ENCODE measurements at regions of chr17 and their contacts with region 1.

Region 1: DNA sequence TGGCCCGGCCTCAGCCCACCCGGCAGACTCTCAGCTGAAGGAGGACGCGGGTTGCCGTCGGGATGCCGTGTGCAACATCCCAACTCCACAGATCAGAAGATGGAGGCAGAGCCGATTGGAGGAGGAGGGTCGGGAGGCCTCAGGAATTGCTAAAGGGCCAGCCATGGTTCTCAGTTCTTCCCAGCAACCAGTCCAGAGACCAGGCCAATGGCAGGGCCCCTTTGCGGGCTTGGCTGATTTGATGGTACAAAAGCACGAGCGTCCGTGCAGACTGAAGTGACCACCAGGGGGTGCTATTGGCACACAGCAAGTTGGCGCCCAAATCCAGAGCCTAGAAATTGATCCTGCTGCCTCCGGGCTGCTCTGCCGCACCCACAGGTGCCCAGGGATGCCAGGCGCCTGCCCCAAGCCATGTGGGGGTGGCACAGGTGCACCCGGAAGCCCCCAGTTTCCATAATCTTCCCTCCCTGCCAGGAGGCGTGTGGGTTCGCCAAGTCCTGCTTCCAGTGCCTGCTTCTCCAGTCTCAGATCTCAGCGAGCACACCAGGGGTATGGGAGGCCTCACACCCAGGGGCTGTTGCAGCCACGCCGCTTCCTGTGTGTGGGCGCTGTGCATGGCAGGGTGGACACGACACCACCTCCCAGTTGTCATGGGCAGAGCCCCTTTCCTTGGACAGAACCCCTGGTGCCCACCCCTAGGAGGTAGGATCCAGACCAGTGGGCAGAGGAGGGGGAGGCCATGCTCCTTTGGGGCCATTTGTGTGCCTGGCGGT is 7.1 kb upstream of the TEX19 start:
- DNase-seq: peak; percentile 92
- ATAC-seq: peak; percentile 92
- H3K4me3 Mint-ChIP-seq: no peak overlapping the region
- H3K27ac Mint-ChIP-seq: no peak overlapping the region
- H3K4me1 Mint-ChIP-seq: no peaks in the 10 kb centered on the region
- H3K27me3 Mint-ChIP-seq: peaks cover 6% of the 10 kb centered on the region

Region 2: DNA sequence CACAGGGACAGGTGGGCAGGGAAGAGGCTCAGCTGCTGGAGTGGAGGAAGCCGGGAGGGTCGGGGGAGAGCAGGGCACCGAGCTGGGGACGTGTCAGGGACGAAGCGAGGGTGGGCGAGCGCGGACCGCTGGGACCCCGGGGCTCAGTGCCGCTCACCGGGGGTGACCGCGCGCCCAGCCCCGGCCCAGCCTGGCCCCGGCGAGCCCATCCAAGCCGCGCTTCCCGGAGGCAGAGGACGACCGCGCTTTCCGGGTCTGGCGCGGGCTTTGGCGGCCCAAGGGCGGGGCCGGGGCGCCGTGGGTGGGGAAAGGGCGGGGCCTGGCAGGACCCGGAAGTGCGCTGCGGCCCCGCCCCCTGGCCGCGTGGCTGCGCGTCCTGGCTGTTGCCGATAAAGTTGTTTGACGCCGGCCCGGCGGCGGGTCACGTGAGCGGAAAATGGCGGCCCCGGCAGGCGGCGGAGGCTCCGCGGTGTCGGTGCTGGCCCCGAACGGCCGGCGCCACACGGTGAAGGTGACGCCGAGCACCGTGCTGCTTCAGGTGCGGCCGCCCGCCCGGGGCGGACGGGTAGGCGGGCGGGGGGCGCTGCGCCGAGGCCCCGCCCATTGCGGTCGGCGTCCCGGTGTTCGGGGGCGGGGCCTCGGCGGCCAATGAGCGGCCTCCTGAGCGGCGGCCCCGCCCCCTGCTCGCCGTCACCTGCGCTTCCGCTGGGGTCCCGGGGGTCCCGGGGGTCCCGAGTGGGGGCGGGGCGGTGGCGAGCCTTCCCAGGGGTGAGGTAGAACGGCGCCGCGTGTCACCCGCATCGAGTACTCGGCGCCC is 374.5 kb before region 1 on chr17 and contains the start of gene ASPSCR1:
- CTCF ChIA-PET with region 1: no interaction called
- POLR2A ChIA-PET with region 1: no interaction called
- intact Hi-C with region 1: no loop called
- DNase-seq: peak; percentile 95
- ATAC-seq: peak; percentile 83
- H3K4me3 Mint-ChIP-seq: peak within 1 kb of the TSS; percentile 94
- H3K27ac Mint-ChIP-seq: peak within 1 kb of the TSS; percentile 98
- H3K4me1 Mint-ChIP-seq: peaks cover 32% of the 10 kb centered on the region
- H3K27me3 Mint-ChIP-seq: no peaks in the 10 kb centered on the region
- total RNA-seq, gene ASPSCR1: 23.3 to 26.5 TPM

Region 3: DNA sequence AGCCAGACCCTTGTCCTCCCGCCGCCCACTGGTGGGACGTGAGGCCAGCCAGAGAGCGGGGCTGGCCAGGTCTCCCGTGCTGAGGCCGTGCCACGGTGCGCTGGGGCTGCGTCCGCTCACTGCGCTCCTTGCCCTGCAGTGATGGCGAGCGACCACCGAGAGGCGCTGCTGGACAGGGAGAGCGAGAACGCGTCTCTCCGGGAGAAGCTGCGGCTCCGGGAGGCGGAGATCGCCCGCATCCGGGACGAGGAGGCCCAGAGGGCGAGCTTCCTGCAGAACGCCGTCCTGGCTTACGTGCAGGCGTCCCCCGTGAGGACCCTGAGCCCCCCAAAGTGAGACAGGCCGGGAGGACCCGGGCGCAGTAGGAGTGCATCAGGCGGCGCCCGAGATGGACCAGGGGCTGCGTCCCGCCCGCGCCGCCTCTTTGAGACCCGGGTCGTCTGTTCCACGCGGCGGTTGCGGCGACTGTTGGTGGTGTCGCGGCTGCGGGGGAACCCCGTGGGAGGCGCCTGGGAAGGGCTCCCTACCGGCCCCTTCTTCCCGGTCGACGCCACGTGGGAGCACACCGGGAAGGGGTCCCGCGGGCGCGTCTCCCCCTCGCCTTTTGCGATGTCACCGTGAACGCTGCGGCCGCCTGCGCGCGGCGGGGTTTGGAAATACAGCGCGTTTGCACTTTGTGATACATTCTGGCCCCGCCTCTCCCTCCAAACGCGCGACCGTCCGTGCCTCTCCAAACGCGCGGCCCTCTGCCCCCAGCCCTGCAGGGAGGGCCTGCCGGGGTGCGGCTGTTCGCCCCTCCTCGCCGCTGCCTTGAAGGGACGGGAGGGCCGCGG is 321.2 kb before region 1 on chr17:
- CTCF ChIA-PET with region 1: no interaction called
- POLR2A ChIA-PET with region 1: no interaction called
- intact Hi-C with region 1: loop called in 1 of 2 experiments (anchors 1 kb)
- DNase-seq: peak; percentile 92
- ATAC-seq: peak; percentile 79
- H3K4me3 Mint-ChIP-seq: peak overlapping the region; percentile 67
- H3K27ac Mint-ChIP-seq: no peak overlapping the region
- H3K4me1 Mint-ChIP-seq: peaks cover 13% of the 10 kb centered on the region
- H3K27me3 Mint-ChIP-seq: no peaks in the 10 kb centered on the region

Region 4: DNA sequence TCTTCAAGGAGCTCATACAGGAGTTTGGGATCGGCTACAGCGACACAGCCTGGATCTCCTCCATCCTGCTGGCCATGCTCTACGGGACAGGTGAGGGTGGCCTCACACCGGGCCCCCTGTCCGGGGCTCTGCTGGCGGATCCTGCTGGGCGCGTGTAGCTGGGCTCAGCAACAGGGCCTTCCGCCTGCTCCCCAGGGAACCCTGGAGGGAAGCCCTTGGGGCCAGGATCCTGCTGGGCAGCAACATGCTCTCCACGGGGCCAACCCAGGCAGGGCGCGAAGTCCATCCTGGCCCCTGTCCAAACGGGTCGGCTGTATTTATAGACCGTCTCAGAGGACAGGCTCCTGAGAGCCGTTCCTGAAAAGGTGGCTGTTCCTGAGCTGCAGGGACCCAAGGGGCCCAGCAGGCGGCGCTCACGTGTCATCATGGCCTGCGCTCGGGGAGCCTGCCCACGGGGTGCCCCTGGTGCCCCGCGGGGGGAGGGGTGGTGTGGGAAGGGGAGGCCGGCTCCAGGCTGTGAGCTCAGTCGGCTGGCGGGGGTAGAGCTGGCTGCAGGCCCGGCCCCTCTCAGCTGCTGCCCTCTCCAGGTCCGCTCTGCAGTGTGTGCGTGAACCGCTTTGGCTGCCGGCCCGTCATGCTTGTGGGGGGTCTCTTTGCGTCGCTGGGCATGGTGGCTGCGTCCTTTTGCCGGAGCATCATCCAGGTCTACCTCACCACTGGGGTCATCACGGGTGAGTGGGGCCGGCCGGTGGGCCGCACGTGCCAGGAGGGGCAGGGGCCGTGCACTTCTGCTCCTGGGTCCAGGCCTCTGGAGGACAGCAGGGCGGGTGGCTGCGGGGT is 115.5 kb before region 1 on chr17:
- CTCF ChIA-PET with region 1: interaction called, 5 read pairs
- POLR2A ChIA-PET with region 1: no interaction called
- intact Hi-C with region 1: loop called in 1 of 2 experiments (anchors 2 kb)
- DNase-seq: peak; percentile 85
- ATAC-seq: peak; percentile 25
- H3K4me3 Mint-ChIP-seq: no peak overlapping the region
- H3K27ac Mint-ChIP-seq: no peak overlapping the region
- H3K4me1 Mint-ChIP-seq: peaks cover 46% of the 10 kb centered on the region
- H3K27me3 Mint-ChIP-seq: no peaks in the 10 kb centered on the region

Region 5: GRCh38 chr17:82494236-82495055 is 142.5 kb after region 1 on chr17:
- CTCF ChIA-PET with region 1: no interaction called
- POLR2A ChIA-PET with region 1: no interaction called
- intact Hi-C with region 1: loop called in 1 of 2 experiments (anchors 1 kb)
- DNase-seq: peak; percentile 93
- ATAC-seq: peak; percentile 80
- H3K4me3 Mint-ChIP-seq: peak overlapping the region; percentile 60
- H3K27ac Mint-ChIP-seq: peak overlapping the region; percentile 76
- H3K4me1 Mint-ChIP-seq: peaks cover 14% of the 10 kb centered on the region
- H3K27me3 Mint-ChIP-seq: no peaks in the 10 kb centered on the region

Region 6: DNA sequence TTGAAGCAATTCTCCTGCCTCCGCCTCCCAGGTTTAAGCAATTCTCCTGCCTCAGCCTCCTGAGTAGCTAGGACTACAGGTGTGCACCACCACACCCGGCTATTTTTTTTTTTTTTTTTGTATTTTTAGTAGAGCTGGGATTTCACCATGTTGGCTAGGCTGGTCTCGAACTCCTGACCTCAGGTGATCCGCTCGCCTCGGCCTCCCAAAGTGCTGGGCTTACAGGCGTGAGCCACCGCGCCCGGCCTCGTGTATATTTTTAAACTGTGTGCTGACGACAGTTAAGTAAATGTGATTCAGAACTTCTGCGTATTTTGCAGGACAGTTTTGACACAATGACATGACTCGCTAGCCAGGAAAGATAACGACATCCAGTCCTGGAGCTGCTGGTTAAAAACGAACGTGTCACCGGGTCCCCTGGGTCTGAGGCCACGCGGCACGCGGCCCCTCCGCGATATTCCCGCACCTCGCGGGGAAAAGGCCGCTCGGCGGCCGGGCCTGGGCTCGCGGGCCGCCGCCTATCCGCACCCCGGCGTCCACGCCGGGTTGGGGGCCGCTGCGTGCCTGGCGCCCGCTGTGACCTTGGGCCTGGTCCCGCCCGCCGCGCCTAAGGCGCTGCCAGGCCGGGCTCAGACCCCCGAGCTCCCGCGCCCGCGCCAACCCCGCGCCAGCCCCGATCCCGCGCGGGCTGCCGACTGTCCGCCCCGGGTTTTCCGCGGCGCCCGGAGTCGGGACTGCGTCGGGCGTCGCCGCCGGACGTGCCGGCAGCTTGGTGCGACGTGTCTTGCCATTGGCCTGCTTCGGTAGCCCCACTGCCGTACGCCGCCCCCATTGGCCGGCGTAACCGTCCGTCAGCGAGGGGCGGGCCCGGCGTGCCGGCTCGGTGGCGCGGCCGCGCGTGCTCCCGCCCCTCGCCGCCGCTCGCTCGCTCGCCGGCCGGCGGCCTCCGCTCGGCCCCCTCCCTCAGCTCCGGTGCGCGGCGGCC is 167.2 kb after region 1 on chr17 and contains the start of gene FOXK2:
- CTCF ChIA-PET with region 1: no interaction called
- POLR2A ChIA-PET with region 1: no interaction called
- intact Hi-C with region 1: no loop called
- DNase-seq: peak; percentile 95
- ATAC-seq: peak; percentile 98
- H3K4me3 Mint-ChIP-seq: peak within 1 kb of the TSS; percentile 88
- H3K27ac Mint-ChIP-seq: peak within 1 kb of the TSS; percentile 92
- H3K4me1 Mint-ChIP-seq: peaks cover 24% of the 10 kb centered on the region
- H3K27me3 Mint-ChIP-seq: no peaks in the 10 kb centered on the region
- total RNA-seq, gene FOXK2: 58.1 to 75.4 TPM

Region 7: DNA sequence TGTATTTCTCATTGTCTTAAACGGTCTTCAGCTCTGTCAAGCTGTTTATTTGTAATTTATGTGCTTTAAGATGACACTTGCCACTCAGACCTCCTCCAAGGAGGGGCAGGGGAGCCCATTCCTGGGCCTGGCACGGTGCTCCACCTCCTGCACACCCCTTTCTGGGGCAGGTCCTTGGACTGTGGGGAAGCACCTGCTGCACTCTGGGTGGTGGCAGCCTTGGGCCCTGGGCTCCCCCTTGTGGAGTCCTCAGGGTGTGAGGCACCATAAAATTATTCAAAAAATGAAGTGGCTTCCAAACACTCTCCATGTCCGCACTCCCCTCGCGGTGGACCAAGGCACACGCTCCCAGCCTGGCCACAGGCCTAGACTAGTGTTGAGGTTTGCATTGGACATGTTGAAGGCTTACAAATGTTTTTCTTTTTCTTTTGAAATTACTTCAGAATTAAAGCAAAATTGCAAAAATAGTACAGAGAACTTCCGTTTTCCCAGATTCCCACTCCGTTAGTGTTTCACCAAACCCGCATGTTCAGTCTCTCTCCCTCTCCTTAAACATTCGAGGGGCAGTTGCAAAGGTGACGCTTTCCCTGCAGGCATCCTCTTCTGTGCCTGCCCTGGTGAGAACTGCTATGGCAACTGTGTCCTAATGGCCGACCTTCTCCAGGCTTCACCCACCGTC is 200.0 kb after region 1 on chr17:
- CTCF ChIA-PET with region 1: interaction called, 3 read pairs
- POLR2A ChIA-PET with region 1: no interaction called
- intact Hi-C with region 1: loop called (anchors 1 to 5 kb)
- DNase-seq: peak; percentile 90
- ATAC-seq: peak; percentile 100
- H3K4me3 Mint-ChIP-seq: no peak overlapping the region
- H3K27ac Mint-ChIP-seq: peak overlapping the region; percentile 56
- H3K4me1 Mint-ChIP-seq: peaks cover 41% of the 10 kb centered on the region
- H3K27me3 Mint-ChIP-seq: no peaks in the 10 kb centered on the region

Region 8: DNA sequence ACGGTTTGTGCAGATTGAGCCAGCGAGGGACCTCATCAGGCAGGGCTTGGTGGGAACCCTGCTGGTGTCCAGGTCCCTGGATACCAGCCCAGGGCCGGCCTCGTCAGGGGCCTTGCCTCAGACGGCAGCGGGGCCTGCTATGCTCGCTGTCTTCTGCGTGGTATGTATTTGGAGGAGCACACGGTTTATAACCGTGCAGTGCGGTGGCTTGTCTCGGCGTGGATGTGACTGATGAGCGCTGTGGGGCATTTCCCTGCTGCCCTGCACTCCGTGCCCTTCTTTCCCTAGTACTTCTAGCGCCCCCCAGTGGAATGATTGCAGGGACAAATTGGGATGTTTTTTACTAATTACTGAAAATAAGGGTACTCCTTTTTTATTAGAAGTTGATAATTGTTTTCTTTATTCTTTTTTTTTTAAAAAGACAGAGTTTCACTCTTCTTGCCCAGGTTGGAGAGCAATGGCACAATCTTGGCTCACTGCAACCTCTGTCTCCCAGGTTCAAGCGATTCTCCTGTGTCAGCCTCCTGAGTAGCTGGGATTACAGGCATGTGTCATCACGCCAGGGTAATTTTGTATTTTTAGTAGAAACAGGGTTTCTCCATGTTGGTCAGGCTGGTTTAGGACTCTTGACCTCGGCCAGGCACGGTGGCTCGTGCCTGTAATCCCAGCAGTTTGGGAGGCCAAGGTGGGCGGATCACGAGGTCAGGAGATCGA is 415.3 kb after region 1 on chr17:
- CTCF ChIA-PET with region 1: no interaction called
- POLR2A ChIA-PET with region 1: no interaction called
- intact Hi-C with region 1: loop called in 1 of 2 experiments (anchors 5 kb)
- DNase-seq: peak; percentile 78
- ATAC-seq: peak; percentile 61
- H3K4me3 Mint-ChIP-seq: no peak overlapping the region
- H3K27ac Mint-ChIP-seq: no peak overlapping the region
- H3K4me1 Mint-ChIP-seq: peaks cover 7% of the 10 kb centered on the region
- H3K27me3 Mint-ChIP-seq: no peaks in the 10 kb centered on the region